ENCODE measurements at regions of chr12 and their contacts with region 1.

Region 1: DNA sequence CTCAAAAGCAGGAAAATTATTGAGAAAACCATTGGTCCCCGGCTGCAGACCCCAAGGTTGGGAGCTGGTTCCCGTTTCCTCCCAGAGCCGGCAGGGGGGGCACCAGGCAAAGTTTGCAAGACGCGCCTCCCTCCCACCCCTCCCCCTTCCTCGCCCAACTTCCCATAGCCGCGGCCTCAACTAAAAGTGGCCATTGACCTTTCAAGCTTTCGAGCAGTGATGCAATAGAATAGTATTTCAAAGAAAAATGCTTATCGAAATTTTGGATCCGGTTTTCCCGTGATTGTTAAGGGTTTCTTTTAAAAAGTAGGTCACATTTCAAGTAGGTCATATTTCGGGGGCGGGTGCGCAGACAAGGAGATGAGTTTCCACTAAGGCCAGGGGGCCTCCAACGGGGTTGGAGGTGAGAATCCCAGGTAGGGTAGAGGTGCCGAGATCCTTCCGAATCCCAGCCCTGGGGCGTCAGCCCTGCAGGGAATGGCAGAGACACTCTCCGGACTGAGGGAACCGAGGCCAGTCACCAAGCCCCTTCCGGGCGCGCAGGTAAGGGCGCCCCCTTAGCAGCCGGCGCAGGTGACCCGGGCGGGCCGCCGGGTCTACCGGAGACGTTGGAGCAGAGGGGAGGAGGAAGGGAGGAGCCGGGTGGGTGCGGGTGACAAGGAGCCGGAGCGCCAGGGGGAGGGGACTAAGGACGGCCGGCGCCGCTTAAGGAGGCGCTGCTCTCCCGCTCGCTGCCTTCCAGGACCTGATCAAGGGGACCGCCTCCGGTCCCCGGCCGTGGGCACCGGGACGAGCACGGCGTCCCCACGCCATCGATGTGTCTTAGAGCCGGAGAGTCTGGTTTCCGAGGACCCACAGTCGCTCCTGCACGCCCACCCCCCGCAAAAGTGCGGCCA is 2.6 kb upstream of the SOCS2 start:
- DNase-seq: peak; percentile 84

Region 2: DNA sequence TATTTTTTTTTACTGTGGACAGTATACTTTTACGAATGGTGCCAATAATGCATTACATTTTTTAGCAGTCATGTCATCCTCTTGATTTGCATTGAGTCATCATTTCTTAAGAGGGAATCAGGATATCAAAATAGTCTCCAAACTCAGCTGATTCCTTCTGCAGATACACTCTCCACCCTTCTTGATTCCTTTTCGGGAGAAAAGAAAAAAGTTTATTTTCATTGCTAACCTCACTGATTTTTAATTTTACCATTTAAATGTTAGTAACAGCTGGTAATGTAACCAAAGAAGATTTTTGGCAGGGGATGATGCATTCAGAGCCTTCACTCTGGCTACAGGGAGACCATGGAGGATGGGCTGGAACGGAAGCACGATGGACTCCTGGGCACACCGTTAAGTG is 55.1 kb before region 1 on chr12:
- CTCF ChIA-PET with region 1: no interaction called
- POLR2A ChIA-PET with region 1: no interaction called
- DNase-seq: no peak

Region 3: GRCh38 chr12:93839064-93839463 is 269.2 kb after region 1 on chr12:
- CTCF ChIA-PET with region 1: interaction called, 14 read pairs
- POLR2A ChIA-PET with region 1: no interaction called
- DNase-seq: no peak